ENCODE measurements at regions of chr6 and their contacts with region 1.

Region 1: DNA sequence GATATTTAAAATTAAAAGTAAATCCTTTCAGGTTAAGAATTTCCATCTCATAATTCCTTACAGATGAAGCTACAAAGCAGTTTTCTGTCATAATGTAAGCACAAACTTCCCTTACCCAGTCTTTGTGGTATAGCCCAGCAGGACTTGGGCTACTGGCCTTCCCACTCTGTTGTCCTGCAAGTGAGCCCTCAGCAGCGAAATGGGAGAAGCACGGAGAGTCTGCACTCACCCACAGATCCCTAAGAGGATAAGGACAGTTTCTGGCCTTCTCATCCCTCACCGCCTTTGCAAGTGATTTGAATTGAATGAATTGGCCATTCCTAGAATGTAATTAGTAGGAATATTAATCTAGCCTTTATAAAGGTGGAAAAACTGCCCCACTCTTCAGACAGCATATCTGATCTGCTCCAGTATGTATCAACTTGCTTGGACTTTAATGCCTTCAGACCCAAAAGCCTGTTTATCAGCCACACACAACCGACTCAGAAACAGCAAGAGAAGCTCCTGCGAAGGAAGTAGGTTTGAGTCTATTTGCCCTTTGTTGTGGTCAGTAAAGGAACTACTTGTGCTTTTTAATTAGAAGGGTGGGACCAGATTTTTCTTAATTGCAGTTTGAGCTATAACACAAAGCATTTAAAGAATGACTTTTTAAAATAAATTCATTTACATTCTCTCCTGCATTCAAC is 29.9 kb upstream of the PRDM1 start:
- DNase-seq: peak in 15 of 35 experiments; percentile 2 to 66 (median 6)
- ATAC-seq: peak; percentile 83 to 95 (median 90)
- H3K4me3 ChIP-seq: peak overlapping the region in 1 of 2 donors; percentile 23
- H3K4me3 Mint-ChIP-seq: peak overlapping the region in 1 of 3 donors; percentile 60
- H3K27ac ChIP-seq: no peak overlapping the region
- H3K27ac Mint-ChIP-seq: peak overlapping the region in 1 of 2 donors; percentile 7
- H3K4me1 ChIP-seq: peaks cover 10 to 15% of the 10 kb centered on the region in 2 experiments
- H3K4me1 Mint-ChIP-seq: peaks cover 20 to 32% (median 27%) of the 10 kb centered on the region in 3 donors
- H3K27me3 ChIP-seq: no peaks in the 10 kb centered on the region
- H3K27me3 Mint-ChIP-seq: no peaks in the 10 kb centered on the region

Region 2: DNA sequence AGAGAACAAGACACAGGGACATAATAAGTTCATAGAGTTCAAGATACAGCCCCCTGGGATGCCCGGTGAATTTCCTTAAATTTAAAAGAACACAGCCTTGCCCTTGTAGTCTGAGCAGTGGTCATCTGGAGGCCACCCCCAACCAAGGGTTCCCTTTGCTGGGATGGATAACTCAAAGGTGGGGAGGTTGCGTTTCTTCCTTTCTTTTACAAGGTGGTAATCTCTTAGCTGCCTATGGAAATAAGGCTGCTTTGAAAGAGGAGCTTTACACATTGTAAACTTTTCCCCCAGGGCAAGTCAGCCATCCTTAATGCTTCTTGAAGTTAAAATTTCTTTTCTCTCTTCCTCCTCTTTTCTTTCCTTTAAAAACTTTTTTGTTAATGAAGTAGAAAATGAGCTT is 41.3 kb before region 1 on chr6:
- CTCF ChIA-PET with region 1: no interaction called
- POLR2A ChIA-PET with region 1: interaction called in 1 of 2 experiments, 10 read pairs
- DNase-seq: no peak
- ATAC-seq: no peak
- H3K4me3 ChIP-seq: no peak overlapping the region
- H3K4me3 Mint-ChIP-seq: no peak overlapping the region
- H3K27ac ChIP-seq: no peak overlapping the region
- H3K27ac Mint-ChIP-seq: no peak overlapping the region
- H3K4me1 ChIP-seq: no peaks in the 10 kb centered on the region
- H3K4me1 Mint-ChIP-seq: no peaks in the 10 kb centered on the region
- H3K27me3 ChIP-seq: peaks cover 0 to 3% of the 10 kb centered on the region in 2 experiments
- H3K27me3 Mint-ChIP-seq: peaks cover 3 to 17% of the 10 kb centered on the region in 2 donors

Measured in T-cell (primary cell).